Kidney (tissue), 22 donors: ENCODE measurements at regions of chr9 and their contacts with region 1.

Region 1: DNA sequence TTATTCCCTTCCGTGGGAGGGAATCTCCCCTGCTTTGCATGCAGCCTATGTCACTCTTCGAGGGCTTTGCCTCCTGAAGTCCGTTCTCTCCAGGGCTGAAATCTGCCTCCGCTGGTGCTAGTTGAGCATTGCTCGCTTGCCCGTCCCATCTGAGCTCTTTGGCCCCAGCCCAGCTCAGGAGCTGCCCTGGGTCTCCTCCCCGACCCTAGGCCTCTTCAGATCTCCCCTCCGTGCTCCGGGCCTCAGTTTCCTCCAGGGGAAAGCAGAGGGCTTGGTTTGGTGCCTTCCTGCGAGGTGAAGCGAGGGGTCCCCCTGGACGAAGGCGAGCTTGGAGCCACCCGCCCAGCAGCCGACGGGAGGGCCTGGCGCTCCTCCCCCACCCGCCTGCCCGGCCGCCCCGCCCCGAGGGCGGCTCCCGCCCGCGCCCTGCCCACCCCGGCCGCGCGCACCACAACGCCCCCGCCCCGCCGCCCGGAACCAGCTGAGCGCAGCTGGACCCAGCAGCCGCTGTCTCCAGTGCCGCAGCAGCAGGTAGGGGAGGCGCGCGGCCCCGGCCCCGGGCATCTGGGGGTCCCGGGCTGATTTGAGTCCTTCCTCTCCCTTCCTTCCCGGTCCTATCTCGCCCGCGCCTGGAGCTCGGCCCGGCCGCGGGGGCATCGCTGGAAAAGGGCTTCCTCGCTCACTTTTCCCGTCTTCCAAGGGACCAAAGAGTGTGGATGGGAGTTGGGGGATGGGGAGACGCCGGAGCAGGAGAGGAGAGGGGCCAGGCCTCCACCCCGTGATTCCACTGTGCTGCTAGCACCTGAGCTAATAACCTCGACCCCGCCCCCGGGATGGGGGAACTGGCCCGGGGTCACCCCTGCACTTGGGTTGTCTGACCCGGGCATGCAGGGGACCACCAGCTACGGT is at the start of gene GSN:
- DNase-seq: peak; percentile 84 to 94 (median 89)
- H3K4me3 ChIP-seq: peak within 1 kb of the TSS; percentile 48 to 78 (median 77)
- H3K27ac ChIP-seq: peak within 1 kb of the TSS; percentile 85 to 91
- H3K4me1 ChIP-seq: peaks cover 0 to 19% (median 7%) of the 10 kb centered on the region in 3 donors
- H3K27me3 ChIP-seq: no peaks in the 10 kb centered on the region
- CTCF ChIP-seq: peak; percentile 6
- total RNA-seq, gene GSN: 511 TPM

Region 2: DNA sequence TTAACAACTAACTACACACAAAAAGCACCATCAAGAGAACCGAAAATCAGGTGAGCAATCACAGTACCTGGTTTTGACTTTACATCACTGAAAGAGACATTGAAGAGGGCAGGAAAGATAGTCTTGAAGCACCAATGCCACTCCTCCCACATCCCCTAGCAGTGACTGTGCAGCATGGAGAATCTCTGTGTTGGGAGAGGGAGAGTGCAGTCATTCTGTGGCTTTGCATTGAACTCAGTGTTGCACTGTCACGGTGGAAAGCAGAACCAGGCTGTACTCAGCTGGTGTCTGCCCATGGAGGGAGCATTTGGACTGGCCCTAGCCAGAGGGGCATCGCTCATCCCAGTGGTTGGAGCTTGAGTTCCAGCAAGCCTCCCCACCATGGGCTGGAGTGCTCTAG is 258.3 kb before region 1 on chr9:
- intact Hi-C with region 1: no loop called
- DNase-seq: no peak
- H3K4me3 ChIP-seq: no peak overlapping the region
- H3K27ac ChIP-seq: no peak overlapping the region
- H3K4me1 ChIP-seq: no peaks in the 10 kb centered on the region
- H3K27me3 ChIP-seq: no peaks in the 10 kb centered on the region
- CTCF ChIP-seq: no peak

Region 3: DNA sequence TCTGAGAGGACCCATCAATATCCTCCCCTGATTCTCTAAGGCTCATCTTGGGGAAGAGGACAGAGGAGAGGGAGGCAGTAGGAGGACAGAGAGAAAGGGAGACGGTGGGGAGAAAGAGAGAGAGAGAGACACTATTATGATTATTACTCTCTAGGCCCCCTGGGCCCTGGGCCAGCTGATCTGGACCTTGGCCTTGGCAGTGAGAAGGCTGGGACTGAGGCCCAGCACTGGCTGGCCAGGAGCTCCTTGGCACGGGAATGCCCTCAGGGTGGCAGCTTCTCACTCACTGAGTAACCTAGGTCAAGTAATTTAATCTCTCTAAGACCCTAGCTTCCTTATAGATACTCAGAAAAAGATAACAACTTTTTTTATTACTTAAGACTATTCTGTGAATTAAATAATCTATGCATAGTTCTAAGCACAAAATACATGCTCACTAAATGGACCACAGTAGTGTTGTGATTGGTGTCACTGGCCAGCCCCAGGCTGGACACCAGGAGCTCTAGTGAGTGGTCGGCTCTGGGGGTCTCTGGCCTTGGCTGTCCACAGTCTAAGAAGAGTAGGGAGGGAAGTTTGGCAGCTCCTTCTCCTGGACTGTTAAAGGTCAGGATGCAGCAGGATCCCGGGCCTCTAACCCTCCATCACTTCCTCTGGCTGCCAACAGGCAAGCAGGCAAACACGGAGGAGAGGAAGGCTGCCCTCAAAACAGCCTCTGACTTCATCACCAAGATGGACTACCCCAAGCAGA is 50.0 kb after region 1 on chr9:
- intact Hi-C with region 1: loop called (anchors 10 kb)
- DNase-seq: no peak
- H3K4me3 ChIP-seq: no peak overlapping the region
- H3K27ac ChIP-seq: peak overlapping the region in 1 of 2 donors; percentile 22
- H3K4me1 ChIP-seq: peaks cover 0 to 16% (median 0%) of the 10 kb centered on the region in 3 donors
- H3K27me3 ChIP-seq: no peaks in the 10 kb centered on the region
- CTCF ChIP-seq: peak; percentile 6